A549 (cell line): ENCODE measurements at regions of chr15 and their contacts with region 1.

Region 1: GRCh38 chr15:81809543-81809942 is 236.3 kb downstream of the MEX3B start:
- DNase-seq: peak; percentile 32 to 59
- ATAC-seq: peak; percentile 47 to 86; a peak in 4 of 6 replicates
- H3K4me3 ChIP-seq: no peak overlapping the region
- H3K27ac ChIP-seq: no peak overlapping the region
- H3K4me1 ChIP-seq: no peaks in the 10 kb centered on the region
- CTCF ChIP-seq: no peak
- EP300 ChIP-seq: no peak
- POLR2A ChIP-seq: no peak
- RAD21 ChIP-seq: 0 out of 5 replicates have a peak, but pooled peaks of 1 of the 2 experiments have one; percentile 3

Region 2: GRCh38 chr15:81819924-81820635 is 10.5 kb after region 1 on chr15:
- CTCF ChIA-PET with region 1: interaction called, 12 read pairs
- POLR2A ChIA-PET with region 1: no interaction called
- DNase-seq: no peak
- ATAC-seq: no peak
- H3K4me3 ChIP-seq: no peak overlapping the region
- H3K27ac ChIP-seq: no peak overlapping the region
- H3K4me1 ChIP-seq: no peaks in the 10 kb centered on the region
- CTCF ChIP-seq: no peak
- EP300 ChIP-seq: no peak
- POLR2A ChIP-seq: no peak
- RAD21 ChIP-seq: no peak

Region 3: GRCh38 chr15:81839387-81839786 is 29.8 kb after region 1 on chr15:
- CTCF ChIA-PET with region 1: no interaction called
- POLR2A ChIA-PET with region 1: no interaction called
- DNase-seq: no peak
- ATAC-seq: no peak
- H3K4me3 ChIP-seq: no peak overlapping the region
- H3K27ac ChIP-seq: no peak overlapping the region
- H3K4me1 ChIP-seq: no peaks in the 10 kb centered on the region
- CTCF ChIP-seq: no peak
- EP300 ChIP-seq: no peak
- POLR2A ChIP-seq: no peak
- RAD21 ChIP-seq: no peak